Activated CD4-positive, alpha-beta T cell treated with anti-CD3 and anti-CD28 coated beads, Interleukin-2, amount 10 ng/mL, durations not matched to agents 24 days and 14 days (primary cell): ENCODE measurements at regions of chr2 and their contacts with region 1.

Region 1: GRCh38 chr2:10538224-10538894 is 90.2 kb upstream of the ODC1 start:
- DNase-seq: no peak
- H3K4me3 Mint-ChIP-seq: peak overlapping the region; percentile 15
- H3K27ac Mint-ChIP-seq: peak overlapping the region; percentile 51
- H3K4me1 Mint-ChIP-seq: peaks cover 17% of the 10 kb centered on the region
- H3K27me3 Mint-ChIP-seq: peaks cover 5% of the 10 kb centered on the region

Region 2: GRCh38 chr2:10493636-10494281 is 44.6 kb before region 1 on chr2:
- intact Hi-C with region 1: loop called (anchors 5 kb)
- DNase-seq: peak; percentile 88
- H3K4me3 Mint-ChIP-seq: no peak overlapping the region
- H3K27ac Mint-ChIP-seq: peak overlapping the region; percentile 34
- H3K4me1 Mint-ChIP-seq: peaks cover 11% of the 10 kb centered on the region
- H3K27me3 Mint-ChIP-seq: peaks cover 37% of the 10 kb centered on the region